MCF 10A (cell line): ENCODE measurements at regions of chr7 and their contacts with region 1.

Region 1: GRCh38 chr7:45021604-45022296 is 21.7 kb downstream of the CCM2 start:
- DNase-seq: no peak
- H3K4me3 Mint-ChIP-seq: no peak overlapping the region
- H3K27ac Mint-ChIP-seq: peak overlapping the region; percentile 28
- H3K4me1 Mint-ChIP-seq: peaks cover 8% of the 10 kb centered on the region
- H3K27me3 Mint-ChIP-seq: no peaks in the 10 kb centered on the region
- CTCF ChIP-seq: no peak

Region 2: DNA sequence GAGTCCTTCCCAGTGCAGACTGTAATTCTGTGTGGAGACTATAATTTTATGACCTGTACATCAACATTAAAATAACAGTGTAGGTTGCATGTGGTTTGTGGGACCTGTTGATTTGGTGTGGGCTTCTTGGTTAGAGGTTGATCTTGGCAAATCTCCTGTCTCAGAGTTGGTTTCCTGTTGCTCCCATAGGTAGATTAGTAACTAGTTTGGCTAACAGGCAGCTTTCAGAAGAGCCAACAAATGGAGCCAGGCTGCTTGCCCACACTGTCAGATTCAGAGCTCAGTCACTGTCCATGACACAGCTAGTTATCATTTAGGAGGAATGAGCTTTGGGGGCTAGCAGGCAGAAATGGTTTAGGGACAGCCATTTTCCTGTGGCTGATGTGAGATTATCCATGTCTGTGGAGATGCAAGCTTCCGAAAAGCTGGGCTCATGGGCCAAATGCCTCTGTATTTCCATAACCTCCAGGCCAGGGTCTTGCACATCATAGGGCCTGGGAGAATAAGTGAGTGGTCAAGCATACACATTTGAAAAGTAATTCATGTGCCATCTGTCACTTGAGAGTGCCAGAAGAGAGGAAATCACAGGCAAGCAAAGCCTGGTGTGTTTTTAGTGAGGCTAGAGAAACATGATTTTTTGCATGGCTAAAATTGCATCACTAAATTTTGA is 11.6 kb after region 1 on chr7:
- CTCF ChIA-PET with region 1: no interaction called
- POLR2A ChIA-PET with region 1: interaction called, 23 read pairs
- intact Hi-C with region 1: no loop called
- DNase-seq: peak; percentile 50
- H3K4me3 Mint-ChIP-seq: no peak overlapping the region
- H3K27ac Mint-ChIP-seq: peak overlapping the region; percentile 90
- H3K4me1 Mint-ChIP-seq: peaks cover 33% of the 10 kb centered on the region
- H3K27me3 Mint-ChIP-seq: no peaks in the 10 kb centered on the region
- CTCF ChIP-seq: no peak

Region 3: DNA sequence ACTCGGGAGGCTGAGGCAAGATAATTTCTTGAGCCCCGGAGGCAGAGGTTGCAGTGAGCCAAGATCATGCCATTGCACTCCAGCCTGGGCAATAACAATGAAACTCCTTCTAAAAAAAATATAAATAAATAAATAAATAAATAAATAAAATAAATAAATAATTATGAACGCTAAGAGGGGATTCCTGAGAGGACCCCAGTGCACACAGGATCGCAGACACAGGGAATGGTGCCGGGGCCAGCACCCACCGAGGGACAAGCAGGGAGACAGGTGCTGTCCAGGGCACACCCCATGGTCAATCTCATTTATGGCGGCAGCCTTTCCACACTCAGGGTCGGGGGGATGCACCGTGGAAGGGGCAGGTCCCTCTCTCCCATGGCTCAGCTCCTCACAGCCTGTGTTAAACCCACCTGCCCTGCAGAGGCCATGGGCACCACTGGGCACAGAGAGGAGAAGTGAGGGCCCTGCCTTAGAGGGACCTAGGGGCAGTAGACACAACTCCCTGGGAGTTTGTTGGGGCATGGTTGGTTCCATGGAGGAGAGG is 133.7 kb after region 1 on chr7:
- CTCF ChIA-PET with region 1: no interaction called
- POLR2A ChIA-PET with region 1: no interaction called
- intact Hi-C with region 1: no loop called
- DNase-seq: no peak
- H3K4me3 Mint-ChIP-seq: no peak overlapping the region
- H3K27ac Mint-ChIP-seq: no peak overlapping the region
- H3K4me1 Mint-ChIP-seq: no peaks in the 10 kb centered on the region
- H3K27me3 Mint-ChIP-seq: peaks cover 24% of the 10 kb centered on the region
- CTCF ChIP-seq: no peak

Region 4: DNA sequence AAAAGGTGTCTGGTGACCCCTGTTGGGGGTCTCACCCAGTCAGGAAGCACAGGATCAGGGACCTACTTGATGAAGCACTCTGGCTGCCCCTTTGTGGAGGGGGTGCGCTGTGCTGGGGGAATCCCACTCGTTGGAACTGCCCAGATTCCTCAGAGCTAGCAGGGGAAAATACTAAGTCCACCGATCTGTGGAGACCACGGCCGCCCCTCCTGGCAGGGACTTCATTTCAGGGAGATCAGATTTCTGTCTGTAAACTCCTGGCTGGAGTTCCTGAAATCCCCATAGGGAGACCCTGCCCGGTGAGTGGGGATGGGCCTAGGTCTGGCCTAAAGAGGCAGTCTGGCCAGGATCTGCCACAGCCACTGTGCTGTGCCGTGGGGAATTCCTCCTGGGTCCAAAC is 473.1 kb after region 1 on chr7:
- CTCF ChIA-PET with region 1: no interaction called
- POLR2A ChIA-PET with region 1: no interaction called
- intact Hi-C with region 1: no loop called
- DNase-seq: no peak
- H3K4me3 Mint-ChIP-seq: no peak overlapping the region
- H3K27ac Mint-ChIP-seq: no peak overlapping the region
- H3K4me1 Mint-ChIP-seq: no peaks in the 10 kb centered on the region
- H3K27me3 Mint-ChIP-seq: peaks cover 90% of the 10 kb centered on the region
- CTCF ChIP-seq: no peak

Region 5: DNA sequence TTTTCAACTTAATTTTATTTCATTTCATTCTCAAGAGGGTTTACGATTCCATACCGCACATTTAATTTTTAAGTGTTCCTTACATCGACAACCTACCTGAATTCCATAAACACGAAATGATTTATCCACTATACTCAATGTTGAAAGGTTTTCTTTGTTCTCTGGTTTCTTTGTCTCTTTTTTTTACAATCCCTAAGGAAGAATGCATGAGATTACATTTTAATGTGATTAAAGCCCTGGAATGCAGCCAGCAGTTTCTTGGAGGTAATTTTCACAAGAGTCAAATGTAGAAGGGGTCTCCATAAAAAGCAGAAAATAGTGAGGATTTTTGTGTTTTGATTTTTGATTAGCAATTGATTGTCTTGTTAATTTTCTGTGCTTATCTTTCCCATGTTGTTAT is 493.2 kb after region 1 on chr7:
- CTCF ChIA-PET with region 1: no interaction called
- POLR2A ChIA-PET with region 1: no interaction called
- intact Hi-C with region 1: no loop called
- DNase-seq: no peak
- H3K4me3 Mint-ChIP-seq: no peak overlapping the region
- H3K27ac Mint-ChIP-seq: no peak overlapping the region
- H3K4me1 Mint-ChIP-seq: no peaks in the 10 kb centered on the region
- H3K27me3 Mint-ChIP-seq: peaks cover 14% of the 10 kb centered on the region
- CTCF ChIP-seq: no peak